Naive thymus-derived CD4-positive, alpha-beta T cell (primary cell): ENCODE measurements at regions of chr14 and their contacts with region 1.

Region 1: DNA sequence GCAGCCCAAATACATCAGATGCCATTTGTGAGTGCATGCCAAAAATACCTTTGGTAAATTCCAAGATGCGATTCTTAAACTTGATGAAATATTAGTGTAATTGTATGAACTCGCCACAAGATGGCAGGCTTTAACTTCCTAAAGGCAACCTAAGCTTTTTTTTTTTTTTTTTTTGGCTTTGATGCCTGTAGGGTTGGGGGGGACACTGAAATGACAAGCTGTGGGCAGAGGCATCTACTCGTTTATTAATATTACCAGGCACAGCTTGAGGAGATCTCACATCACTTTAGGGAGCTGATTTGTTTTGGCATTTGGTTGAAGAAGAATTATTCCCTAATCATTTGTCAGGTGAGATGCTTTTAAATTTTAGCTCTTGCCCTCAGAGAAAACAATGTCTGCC is 126.7 kb upstream of the CCDC196 start:
- DNase-seq: peak in 7 of 9 donors; percentile 29 to 58 (median 42)
- ATAC-seq: peak; percentile 51
- H3K4me3 ChIP-seq: no peak overlapping the region
- H3K4me3 Mint-ChIP-seq: no peak overlapping the region
- H3K27ac ChIP-seq: no peak overlapping the region
- H3K27ac Mint-ChIP-seq: no peak overlapping the region
- H3K4me1 ChIP-seq: no peaks in the 10 kb centered on the region
- H3K4me1 Mint-ChIP-seq: peaks cover 0 to 2% (median 0%) of the 10 kb centered on the region in 7 donors
- H3K27me3 ChIP-seq: no peaks in the 10 kb centered on the region
- H3K27me3 Mint-ChIP-seq: peaks cover 0 to 18% (median 0%) of the 10 kb centered on the region in 5 donors

Region 2: GRCh38 chr14:65164068-65164824 is 1195.3 kb before region 1 on chr14:
- CTCF ChIA-PET with region 1: interaction called, 4 read pairs
- POLR2A ChIA-PET with region 1: no interaction called
- intact Hi-C with region 1: loop called in 1 of 2 experiments (anchors 5 kb)
- DNase-seq: peak in 7 of 9 donors; percentile 29 to 67 (median 58)
- ATAC-seq: peak; percentile 76
- H3K4me3 ChIP-seq: no peak overlapping the region
- H3K4me3 Mint-ChIP-seq: no peak overlapping the region
- H3K27ac ChIP-seq: no peak overlapping the region
- H3K27ac Mint-ChIP-seq: peak overlapping the region in 1 of 9 donors; percentile 67
- H3K4me1 ChIP-seq: no peaks in the 10 kb centered on the region
- H3K4me1 Mint-ChIP-seq: peaks cover 0 to 43% (median 0%) of the 10 kb centered on the region in 7 donors
- H3K27me3 ChIP-seq: no peaks in the 10 kb centered on the region
- H3K27me3 Mint-ChIP-seq: no peaks in the 10 kb centered on the region

Region 3: GRCh38 chr14:66240092-66240491 is 119.4 kb before region 1 on chr14:
- CTCF ChIA-PET with region 1: no interaction called
- POLR2A ChIA-PET with region 1: no interaction called
- intact Hi-C with region 1: no loop called
- DNase-seq: no peak
- ATAC-seq: no peak
- H3K4me3 ChIP-seq: no peak overlapping the region
- H3K4me3 Mint-ChIP-seq: no peak overlapping the region
- H3K27ac ChIP-seq: no peak overlapping the region
- H3K27ac Mint-ChIP-seq: no peak overlapping the region
- H3K4me1 ChIP-seq: no peaks in the 10 kb centered on the region
- H3K4me1 Mint-ChIP-seq: no peaks in the 10 kb centered on the region
- H3K27me3 ChIP-seq: no peaks in the 10 kb centered on the region
- H3K27me3 Mint-ChIP-seq: peaks cover 4 to 17% (median 11%) of the 10 kb centered on the region in 5 donors

Region 4: DNA sequence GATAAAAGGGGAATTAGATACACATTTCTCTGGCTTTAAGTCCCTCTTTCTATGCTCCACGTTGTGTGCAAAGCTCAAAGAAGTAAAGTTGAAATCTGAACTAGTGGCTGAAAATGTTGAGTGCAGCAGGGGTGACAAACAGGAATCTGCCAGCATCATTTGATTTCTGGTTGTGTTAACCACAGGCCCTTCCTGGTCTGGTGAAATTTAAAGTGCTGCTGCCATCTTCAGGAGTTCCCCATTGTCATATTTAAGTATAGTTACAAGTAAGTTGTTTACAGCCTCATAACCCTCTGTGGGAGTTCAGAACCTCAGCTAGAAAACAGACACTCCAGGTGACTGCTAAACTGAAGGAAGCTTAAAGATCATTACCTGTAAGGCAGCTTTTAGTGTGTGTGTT is 35.8 kb after region 1 on chr14:
- CTCF ChIA-PET with region 1: no interaction called
- POLR2A ChIA-PET with region 1: no interaction called
- intact Hi-C with region 1: loop called in 1 of 2 experiments (anchors 1 kb)
- DNase-seq: peak in 4 of 9 donors; percentile 1 to 26 (median 18)
- ATAC-seq: peak; percentile 74
- H3K4me3 ChIP-seq: no peak overlapping the region
- H3K4me3 Mint-ChIP-seq: no peak overlapping the region
- H3K27ac ChIP-seq: no peak overlapping the region
- H3K27ac Mint-ChIP-seq: no peak overlapping the region
- H3K4me1 ChIP-seq: peaks cover 0 to 6% of the 10 kb centered on the region in 2 donors
- H3K4me1 Mint-ChIP-seq: peaks cover 0 to 5% (median 0%) of the 10 kb centered on the region in 7 donors
- H3K27me3 ChIP-seq: no peaks in the 10 kb centered on the region
- H3K27me3 Mint-ChIP-seq: peaks cover 0 to 13% (median 0%) of the 10 kb centered on the region in 5 donors

Region 5: DNA sequence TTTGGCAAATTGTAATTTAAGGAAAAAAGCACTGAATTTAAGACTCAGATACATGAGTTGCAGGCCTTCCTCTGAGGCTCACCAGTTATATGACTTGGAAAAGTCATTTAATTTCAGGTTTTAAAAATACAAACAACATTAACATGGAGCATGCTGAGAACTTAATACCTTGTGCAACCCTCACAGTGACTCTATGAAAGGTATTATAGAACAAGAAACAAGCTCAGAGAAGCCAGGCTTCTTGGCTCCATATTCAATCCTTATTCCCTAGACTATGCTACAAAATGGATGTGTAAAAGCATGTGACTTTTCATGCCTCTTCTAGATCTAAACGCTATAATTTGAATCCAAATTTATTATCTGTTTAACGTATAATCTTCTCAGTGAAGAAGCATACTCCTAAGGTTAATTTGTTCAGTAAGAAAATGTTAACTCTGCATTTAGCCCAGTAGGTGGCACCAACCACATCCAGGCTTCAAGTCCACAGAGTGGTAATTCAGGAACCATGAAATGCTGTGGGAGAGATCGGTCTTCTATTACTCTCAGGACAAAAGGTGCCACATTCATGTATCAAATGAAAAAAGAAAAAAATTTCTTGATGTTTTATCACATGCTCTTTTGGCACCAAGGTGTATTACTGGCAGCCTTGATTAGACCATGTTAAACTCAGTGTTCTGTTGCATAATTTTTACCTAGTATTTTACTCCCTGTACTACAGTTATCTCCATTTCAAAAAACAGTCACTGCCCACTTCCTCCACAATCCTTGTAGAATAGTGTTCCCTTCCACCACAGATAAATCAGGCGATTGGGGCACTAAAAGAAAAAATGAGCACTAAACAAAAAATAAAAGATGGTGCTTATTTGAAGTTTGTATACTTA is 136.0 kb after region 1 on chr14:
- CTCF ChIA-PET with region 1: interaction called, 4 read pairs
- POLR2A ChIA-PET with region 1: no interaction called
- intact Hi-C with region 1: loop called in 1 of 2 experiments (anchors 1 kb)
- DNase-seq: peak in 7 of 9 donors; percentile 11 to 44 (median 27)
- ATAC-seq: peak; percentile 83
- H3K4me3 ChIP-seq: no peak overlapping the region
- H3K4me3 Mint-ChIP-seq: peak overlapping the region in 7 of 10 donors; percentile 6 to 67 (median 14)
- H3K27ac ChIP-seq: no peak overlapping the region
- H3K27ac Mint-ChIP-seq: peak overlapping the region in 2 of 9 donors; percentile 11 to 53
- H3K4me1 ChIP-seq: peaks cover 0 to 10% of the 10 kb centered on the region in 2 donors
- H3K4me1 Mint-ChIP-seq: peaks cover 8 to 29% (median 24%) of the 10 kb centered on the region in 7 donors
- H3K27me3 ChIP-seq: no peaks in the 10 kb centered on the region
- H3K27me3 Mint-ChIP-seq: no peaks in the 10 kb centered on the region

Region 6: DNA sequence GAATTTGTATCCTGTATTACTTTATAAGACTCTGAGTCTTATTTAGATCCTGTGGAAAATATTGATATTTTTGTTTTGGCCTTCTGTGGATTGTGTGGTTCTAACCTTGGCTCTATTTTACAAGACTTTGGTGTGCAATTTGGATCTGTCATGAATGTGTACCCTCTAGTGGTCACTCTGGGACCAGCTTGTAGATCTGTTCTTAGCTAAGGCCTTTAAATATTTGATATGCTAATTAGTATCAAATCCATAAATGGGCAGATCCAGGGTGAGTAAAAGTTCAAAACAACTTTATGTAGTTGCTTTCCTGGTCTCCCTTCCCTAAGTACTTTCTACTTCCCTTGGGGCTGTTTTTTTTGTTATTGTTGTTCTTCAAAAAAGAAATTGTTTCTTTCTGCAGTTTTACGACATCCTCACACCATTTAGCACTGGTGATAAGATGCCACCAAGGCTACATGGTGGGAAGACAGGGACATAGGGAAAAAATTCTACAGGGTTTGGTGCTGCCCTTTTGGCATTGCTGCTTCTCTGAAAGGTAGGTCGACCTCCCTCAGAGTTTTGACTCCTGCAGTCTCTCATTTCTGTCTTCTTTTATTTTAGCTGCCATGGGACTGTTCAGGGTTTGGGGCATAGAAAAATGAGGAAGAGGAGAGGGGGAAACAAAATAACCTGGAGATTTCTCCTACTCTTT is 387.0 kb after region 1 on chr14:
- CTCF ChIA-PET with region 1: interaction called, 4 read pairs
- POLR2A ChIA-PET with region 1: no interaction called
- intact Hi-C with region 1: loop called in 1 of 2 experiments (anchors 1 kb)
- DNase-seq: peak in 3 of 9 donors; percentile 2 to 5 (median 2)
- ATAC-seq: no peak
- H3K4me3 ChIP-seq: no peak overlapping the region
- H3K4me3 Mint-ChIP-seq: no peak overlapping the region
- H3K27ac ChIP-seq: no peak overlapping the region
- H3K27ac Mint-ChIP-seq: no peak overlapping the region
- H3K4me1 ChIP-seq: no peaks in the 10 kb centered on the region
- H3K4me1 Mint-ChIP-seq: peaks cover 0 to 1% (median 0%) of the 10 kb centered on the region in 7 donors
- H3K27me3 ChIP-seq: no peaks in the 10 kb centered on the region
- H3K27me3 Mint-ChIP-seq: no peaks in the 10 kb centered on the region

Region 7: DNA sequence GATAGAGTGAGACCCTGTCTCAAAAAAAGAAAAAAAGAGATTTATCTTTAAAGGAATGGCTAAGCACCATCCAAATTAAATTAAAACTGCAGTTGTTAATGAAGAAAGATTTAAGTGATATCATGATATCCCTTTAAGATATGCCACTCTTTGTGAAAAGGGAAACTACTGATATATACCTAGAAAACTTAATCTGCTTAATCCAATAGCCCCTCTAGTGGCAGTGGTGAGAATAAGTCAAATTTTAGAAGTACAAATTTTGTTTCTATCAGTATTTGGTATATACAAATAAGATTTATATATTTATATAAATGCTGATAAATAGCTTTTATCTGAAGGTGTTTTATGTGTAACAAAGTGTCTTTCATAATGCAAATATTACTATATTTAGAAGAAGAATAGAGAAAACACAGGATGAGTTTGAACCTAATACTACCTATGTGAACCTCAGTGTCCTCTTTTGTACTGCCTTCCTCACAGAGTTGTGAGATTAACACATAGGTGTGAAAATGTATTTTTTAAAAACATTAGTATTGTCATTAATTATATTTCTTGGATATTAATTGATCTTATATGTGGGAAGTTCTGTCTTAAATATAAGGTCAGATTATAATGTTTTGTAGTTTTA is 778.4 kb after region 1 on chr14:
- CTCF ChIA-PET with region 1: no interaction called
- POLR2A ChIA-PET with region 1: no interaction called
- intact Hi-C with region 1: loop called in 1 of 2 experiments (anchors 5 kb)
- DNase-seq: peak in 1 of 9 donors; percentile 4
- ATAC-seq: no peak
- H3K4me3 ChIP-seq: no peak overlapping the region
- H3K4me3 Mint-ChIP-seq: no peak overlapping the region
- H3K27ac ChIP-seq: no peak overlapping the region
- H3K27ac Mint-ChIP-seq: no peak overlapping the region
- H3K4me1 ChIP-seq: no peaks in the 10 kb centered on the region
- H3K4me1 Mint-ChIP-seq: peaks cover 0 to 9% (median 0%) of the 10 kb centered on the region in 7 donors
- H3K27me3 ChIP-seq: no peaks in the 10 kb centered on the region
- H3K27me3 Mint-ChIP-seq: no peaks in the 10 kb centered on the region

Region 8: DNA sequence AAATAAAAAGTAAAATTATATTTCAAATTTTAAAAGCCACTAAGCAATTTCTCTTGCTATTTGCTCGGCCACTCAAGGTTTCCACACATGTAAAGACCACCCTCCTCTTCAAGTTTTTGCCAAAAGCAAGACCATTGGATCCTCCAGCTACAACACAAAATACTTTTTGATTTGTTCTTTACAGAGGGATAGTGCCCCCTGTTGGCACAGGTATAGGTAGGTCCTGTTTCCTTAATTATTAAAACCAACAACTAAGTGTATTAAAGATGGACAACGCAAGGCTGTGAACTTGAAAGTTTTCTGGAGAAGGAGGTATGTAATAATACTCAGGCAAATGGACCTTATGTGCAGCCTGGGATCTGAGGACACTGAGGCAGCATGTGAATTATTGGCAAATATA is 976.3 kb after region 1 on chr14:
- CTCF ChIA-PET with region 1: interaction called, 3 read pairs
- POLR2A ChIA-PET with region 1: no interaction called
- intact Hi-C with region 1: loop called in 1 of 2 experiments (anchors 1 kb)
- DNase-seq: peak in 5 of 9 donors; percentile 2 to 10 (median 7)
- ATAC-seq: peak; percentile 22
- H3K4me3 ChIP-seq: no peak overlapping the region
- H3K4me3 Mint-ChIP-seq: no peak overlapping the region
- H3K27ac ChIP-seq: no peak overlapping the region
- H3K27ac Mint-ChIP-seq: peak overlapping the region in 1 of 9 donors; percentile 73
- H3K4me1 ChIP-seq: no peaks in the 10 kb centered on the region
- H3K4me1 Mint-ChIP-seq: peaks cover 0 to 1% (median 0%) of the 10 kb centered on the region in 7 donors
- H3K27me3 ChIP-seq: no peaks in the 10 kb centered on the region
- H3K27me3 Mint-ChIP-seq: no peaks in the 10 kb centered on the region